Esophagus muscularis mucosa (tissue), 4 donors: ENCODE measurements at regions of chr10 and their contacts with region 1.

Region 1: GRCh38 chr10:30534465-30535144 is 94.9 kb downstream of the LYZL2 start:
- DNase-seq: peak; percentile 97
- H3K4me3 ChIP-seq: no peak overlapping the region
- H3K27ac ChIP-seq: no peak overlapping the region
- H3K4me1 ChIP-seq: peaks cover 5 to 29% (median 17%) of the 10 kb centered on the region in 4 donors
- H3K27me3 ChIP-seq: no peaks in the 10 kb centered on the region
- CTCF ChIP-seq: peak; percentile 91 to 93 (median 93)
- EP300 ChIP-seq: no peak
- POLR2A ChIP-seq: no peak

Region 2: GRCh38 chr10:30392564-30392990 is 142.0 kb before region 1 on chr10:
- intact Hi-C with region 1: loop called (anchors 5 kb)
- DNase-seq: no peak
- H3K4me3 ChIP-seq: peak overlapping the region in 2 of 4 donors; percentile 28 to 45
- H3K27ac ChIP-seq: no peak overlapping the region
- H3K4me1 ChIP-seq: peaks cover 5 to 15% (median 10%) of the 10 kb centered on the region in 4 donors
- H3K27me3 ChIP-seq: no peaks in the 10 kb centered on the region
- CTCF ChIP-seq: peak; percentile 89 to 100 (median 92)
- EP300 ChIP-seq: no peak
- POLR2A ChIP-seq: no peak

Region 3: DNA sequence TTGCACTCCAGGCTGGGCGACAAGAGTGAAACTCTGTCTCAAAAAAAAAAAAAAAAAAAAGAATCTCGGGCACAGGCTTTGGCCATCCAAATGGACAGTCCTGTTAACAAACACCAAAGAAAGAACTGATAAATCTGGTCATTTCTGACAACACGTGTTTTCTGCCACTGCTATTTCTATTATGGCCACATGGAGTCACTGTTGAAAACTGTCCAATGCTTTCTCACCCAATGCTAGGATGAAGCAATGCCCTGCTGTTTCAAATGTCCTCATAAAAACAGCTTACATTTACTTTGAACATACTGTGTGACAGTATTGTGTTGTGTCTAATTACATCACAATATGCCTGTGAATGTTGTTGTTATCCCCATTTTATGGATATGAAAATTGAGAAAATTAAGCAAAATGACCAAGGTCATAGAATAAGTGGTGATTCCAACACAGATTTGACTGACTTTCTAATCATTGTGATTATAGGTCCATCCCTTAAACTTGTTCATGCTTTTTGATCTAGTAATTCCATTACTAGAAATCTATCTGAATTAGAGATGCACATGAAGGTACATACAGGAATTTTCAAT is 120.5 kb before region 1 on chr10:
- intact Hi-C with region 1: loop called (anchors 2 kb)
- DNase-seq: no peak
- H3K4me3 ChIP-seq: no peak overlapping the region
- H3K27ac ChIP-seq: no peak overlapping the region
- H3K4me1 ChIP-seq: peaks cover 0 to 7% (median 2%) of the 10 kb centered on the region in 4 donors
- H3K27me3 ChIP-seq: no peaks in the 10 kb centered on the region
- CTCF ChIP-seq: peak; percentile 77 to 90 (median 79)
- EP300 ChIP-seq: no peak
- POLR2A ChIP-seq: no peak